Gastrocnemius medialis (tissue), 4 donors: ENCODE measurements at regions of chr9 and their contacts with region 1.

Region 1: DNA sequence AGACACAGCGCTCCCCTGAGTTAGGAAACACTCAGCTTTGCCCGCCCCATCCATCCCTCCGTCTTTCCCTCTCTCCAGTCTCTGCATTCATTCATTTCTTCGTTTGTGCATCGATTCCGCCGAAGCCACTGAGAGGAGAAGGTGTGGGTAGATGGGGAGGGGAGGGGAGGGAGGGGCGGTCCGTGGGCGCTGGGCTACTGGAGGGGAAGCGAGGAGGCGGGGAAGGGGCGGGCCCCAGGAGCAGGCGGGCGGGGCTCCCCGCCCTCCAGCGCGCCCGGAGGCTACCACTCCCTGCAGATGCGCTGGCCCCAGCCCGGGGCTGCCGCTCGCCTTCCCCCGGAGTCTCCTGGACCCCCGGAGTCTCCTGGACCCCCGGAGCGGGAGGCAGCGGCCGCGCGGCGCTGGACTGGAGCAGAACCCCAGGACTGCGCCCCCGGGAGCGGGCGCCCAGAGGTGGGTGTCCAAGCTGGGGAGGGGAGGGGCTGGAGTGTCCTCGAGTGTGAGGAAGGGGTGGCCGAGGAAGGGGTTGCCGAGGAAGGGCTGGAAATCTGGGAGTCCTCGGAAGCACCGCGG is 159.5 kb downstream of the C9orf152 start:
- DNase-seq: peak; percentile 30
- ATAC-seq: peak; percentile 60 to 61
- H3K4me3 ChIP-seq: peak overlapping the region; percentile 64 to 74 (median 69)
- H3K27ac ChIP-seq: peak overlapping the region; percentile 68 to 82 (median 78)
- H3K4me1 ChIP-seq: peaks cover 0 to 16% of the 10 kb centered on the region in 2 donors
- H3K27me3 ChIP-seq: peaks cover 9 to 15% (median 14%) of the 10 kb centered on the region in 3 donors
- CTCF ChIP-seq: no peak
- POLR2A ChIP-seq: peak; percentile 55 to 84

Region 2: GRCh38 chr9:109986521-109986991 is 61.9 kb before region 1 on chr9:
- in situ Hi-C with region 1: loop called in 1 of 4 experiments (anchors 10 kb)
- intact Hi-C with region 1: no loop called
- DNase-seq: no peak
- ATAC-seq: no peak
- H3K4me3 ChIP-seq: no peak overlapping the region
- H3K27ac ChIP-seq: no peak overlapping the region
- H3K4me1 ChIP-seq: no peaks in the 10 kb centered on the region
- H3K27me3 ChIP-seq: no peaks in the 10 kb centered on the region
- CTCF ChIP-seq: no peak
- POLR2A ChIP-seq: no peak

Region 3: GRCh38 chr9:110152704-110153374 is 104.3 kb after region 1 on chr9:
- in situ Hi-C with region 1: no loop called
- intact Hi-C with region 1: loop called (anchors 5 kb)
- DNase-seq: no peak
- ATAC-seq: no peak
- H3K4me3 ChIP-seq: no peak overlapping the region
- H3K27ac ChIP-seq: peak overlapping the region in 2 of 4 donors; percentile 22 to 29
- H3K4me1 ChIP-seq: peaks cover 13 to 16% of the 10 kb centered on the region in 2 donors
- H3K27me3 ChIP-seq: no peaks in the 10 kb centered on the region
- CTCF ChIP-seq: peak; percentile 53 to 71 (median 62)
- POLR2A ChIP-seq: no peak